Endothelial cell of umbilical vein (primary cell): ENCODE measurements at regions of chr10 and their contacts with region 1.

Region 1: GRCh38 chr10:113087165-113088029 is 137.3 kb downstream of the TCF7L2 start:
- DNase-seq: peak; percentile 99
- H3K4me3 ChIP-seq: no peak overlapping the region
- H3K27ac ChIP-seq: peak overlapping the region; percentile 90
- H3K4me1 ChIP-seq: peaks cover 28% of the 10 kb centered on the region
- H3K27me3 ChIP-seq: no peaks in the 10 kb centered on the region
- CTCF ChIP-seq: no peak
- POLR2A ChIP-seq: no peak

Region 2: GRCh38 chr10:113020838-113021237 is 66.6 kb before region 1 on chr10:
- CTCF ChIA-PET with region 1: no interaction called
- POLR2A ChIA-PET with region 1: no interaction called
- dilution Hi-C with region 1: no loop called
- intact Hi-C with region 1: loop called (anchors 2 kb)
- DNase-seq: no peak
- H3K4me3 ChIP-seq: no peak overlapping the region
- H3K27ac ChIP-seq: no peak overlapping the region
- H3K4me1 ChIP-seq: peaks cover 18% of the 10 kb centered on the region
- H3K27me3 ChIP-seq: no peaks in the 10 kb centered on the region
- CTCF ChIP-seq: no peak
- POLR2A ChIP-seq: no peak

Region 3: GRCh38 chr10:113052076-113052830 is 35.1 kb before region 1 on chr10:
- CTCF ChIA-PET with region 1: interaction called, 4 read pairs
- POLR2A ChIA-PET with region 1: no interaction called
- dilution Hi-C with region 1: no loop called
- intact Hi-C with region 1: loop called (anchors 1 kb)
- DNase-seq: no peak
- H3K4me3 ChIP-seq: no peak overlapping the region
- H3K27ac ChIP-seq: no peak overlapping the region
- H3K4me1 ChIP-seq: peaks cover 40% of the 10 kb centered on the region
- H3K27me3 ChIP-seq: no peaks in the 10 kb centered on the region
- CTCF ChIP-seq: peak; percentile 21 to 24
- POLR2A ChIP-seq: no peak

Region 4: DNA sequence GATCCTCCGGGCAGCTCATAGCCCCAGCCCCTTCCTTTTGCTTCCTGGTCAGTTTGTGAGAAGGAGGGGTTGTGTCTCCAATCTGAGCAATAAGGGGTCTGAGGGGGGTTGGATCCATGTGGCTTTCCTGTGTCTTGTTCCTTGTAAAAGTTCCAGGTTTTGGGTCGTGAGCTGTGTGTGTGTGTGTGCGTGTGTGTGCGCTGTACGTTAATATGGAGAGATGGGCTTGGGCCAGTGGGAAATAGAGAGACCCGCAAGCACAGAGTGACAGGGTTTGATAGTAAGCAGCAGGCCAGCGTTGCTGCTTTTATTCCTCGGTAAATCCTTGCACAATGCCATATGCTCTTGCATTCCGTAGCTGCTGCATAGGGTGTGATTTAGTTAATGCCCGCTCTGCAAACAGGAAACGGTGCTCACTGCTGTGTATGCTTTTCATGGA is 28.9 kb before region 1 on chr10:
- CTCF ChIA-PET with region 1: interaction called, 4 read pairs
- POLR2A ChIA-PET with region 1: no interaction called
- dilution Hi-C with region 1: no loop called
- intact Hi-C with region 1: loop called (anchors 1 kb)
- DNase-seq: peak; percentile 59
- H3K4me3 ChIP-seq: peak overlapping the region in 1 of 3 experiments; percentile 13
- H3K27ac ChIP-seq: peak overlapping the region; percentile 68
- H3K4me1 ChIP-seq: peaks cover 56% of the 10 kb centered on the region
- H3K27me3 ChIP-seq: no peaks in the 10 kb centered on the region
- CTCF ChIP-seq: no peak
- POLR2A ChIP-seq: no peak

Region 5: DNA sequence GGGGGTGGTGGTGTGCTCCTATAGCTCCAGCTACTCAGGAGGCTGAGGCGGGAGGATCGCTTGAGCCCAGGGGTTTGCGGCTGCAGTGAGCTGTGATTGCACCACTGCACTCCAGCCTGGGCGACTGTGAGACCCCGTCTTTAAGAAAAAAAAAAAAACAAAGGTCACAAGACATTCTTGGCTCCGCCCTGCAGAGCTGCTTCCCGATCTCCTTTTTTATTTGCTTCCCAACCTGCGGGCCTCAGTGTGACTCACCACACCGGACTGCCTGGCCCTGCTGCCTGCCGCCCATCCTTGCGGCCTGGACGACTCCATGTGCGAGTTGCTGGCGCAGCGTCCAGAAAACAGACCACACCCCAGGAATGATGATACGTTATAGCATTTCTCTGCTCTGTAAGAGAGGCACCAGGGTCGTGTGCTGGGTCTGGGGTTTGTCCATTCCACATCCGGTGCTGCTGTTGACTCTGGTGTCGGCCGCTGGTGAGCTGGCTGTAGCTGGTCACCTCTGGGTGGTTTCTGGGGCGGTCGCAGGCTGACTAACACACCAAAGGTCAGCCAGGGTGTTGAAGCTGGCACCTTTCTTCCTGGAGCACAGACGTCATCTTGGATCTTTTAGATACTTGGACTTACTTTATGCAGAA is 13.7 kb before region 1 on chr10:
- CTCF ChIA-PET with region 1: interaction called, 6 read pairs
- POLR2A ChIA-PET with region 1: interaction called, 4 read pairs
- dilution Hi-C with region 1: no loop called
- intact Hi-C with region 1: loop called (anchors 1 kb)
- DNase-seq: peak; percentile 92
- H3K4me3 ChIP-seq: no peak overlapping the region
- H3K27ac ChIP-seq: peak overlapping the region; percentile 76
- H3K4me1 ChIP-seq: peaks cover 35% of the 10 kb centered on the region
- H3K27me3 ChIP-seq: no peaks in the 10 kb centered on the region
- CTCF ChIP-seq: no peak
- POLR2A ChIP-seq: peak; percentile 78